B cell (primary cell): ENCODE measurements at regions of chr12 and their contacts with region 1.

Region 1: GRCh38 chr12:63802012-63802608 is 22.4 kb downstream of the RXYLT1 start:
- DNase-seq: peak; percentile 34
- ATAC-seq: no peak
- H3K4me3 ChIP-seq: no peak overlapping the region
- H3K4me3 Mint-ChIP-seq: no peak overlapping the region
- H3K27ac ChIP-seq: no peak overlapping the region
- H3K27ac Mint-ChIP-seq: no peak overlapping the region
- H3K4me1 ChIP-seq: no peaks in the 10 kb centered on the region
- H3K4me1 Mint-ChIP-seq: peaks cover 8% of the 10 kb centered on the region
- H3K27me3 ChIP-seq: no peaks in the 10 kb centered on the region
- H3K27me3 Mint-ChIP-seq: no peaks in the 10 kb centered on the region
- CTCF ChIP-seq: peak; percentile 65

Region 2: GRCh38 chr12:63103494-63104131 is 698.5 kb before region 1 on chr12:
- CTCF ChIA-PET with region 1: interaction called, 10 read pairs
- POLR2A ChIA-PET with region 1: no interaction called
- intact Hi-C with region 1: no loop called
- DNase-seq: peak; percentile 6
- ATAC-seq: no peak
- H3K4me3 ChIP-seq: no peak overlapping the region
- H3K4me3 Mint-ChIP-seq: no peak overlapping the region
- H3K27ac ChIP-seq: no peak overlapping the region
- H3K27ac Mint-ChIP-seq: no peak overlapping the region
- H3K4me1 ChIP-seq: no peaks in the 10 kb centered on the region
- H3K4me1 Mint-ChIP-seq: no peaks in the 10 kb centered on the region
- H3K27me3 ChIP-seq: peaks cover 0 to 3% (median 0%) of the 10 kb centered on the region in 4 experiments
- H3K27me3 Mint-ChIP-seq: peaks cover 6% of the 10 kb centered on the region
- CTCF ChIP-seq: peak; percentile 85

Region 3: DNA sequence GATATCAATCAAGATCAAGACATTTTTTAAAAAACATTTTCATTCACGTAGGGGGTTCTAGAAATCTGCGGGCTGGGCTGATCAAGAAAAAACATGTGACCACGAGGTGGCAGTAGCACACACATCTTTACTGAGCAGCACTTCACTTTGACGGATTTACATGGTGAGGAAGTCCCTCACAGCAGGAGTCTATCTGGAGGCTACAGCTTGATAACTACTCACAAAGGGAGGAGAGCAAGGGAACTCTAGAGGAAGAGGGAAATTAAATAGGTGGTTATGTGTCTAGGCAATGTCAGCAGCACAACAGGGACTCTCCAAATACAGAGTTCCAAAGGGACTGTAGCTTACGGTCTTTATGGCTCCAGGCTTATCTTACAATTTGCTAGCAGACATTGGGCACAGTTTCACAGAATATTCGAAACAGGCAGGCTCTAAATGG is 381.9 kb before region 1 on chr12:
- CTCF ChIA-PET with region 1: interaction called, 20 read pairs
- POLR2A ChIA-PET with region 1: no interaction called
- intact Hi-C with region 1: no loop called
- DNase-seq: peak; percentile 38
- ATAC-seq: no peak
- H3K4me3 ChIP-seq: no peak overlapping the region
- H3K4me3 Mint-ChIP-seq: no peak overlapping the region
- H3K27ac ChIP-seq: no peak overlapping the region
- H3K27ac Mint-ChIP-seq: no peak overlapping the region
- H3K4me1 ChIP-seq: no peaks in the 10 kb centered on the region
- H3K4me1 Mint-ChIP-seq: no peaks in the 10 kb centered on the region
- H3K27me3 ChIP-seq: no peaks in the 10 kb centered on the region
- H3K27me3 Mint-ChIP-seq: no peaks in the 10 kb centered on the region
- CTCF ChIP-seq: peak; percentile 59